Activated CD4-positive, alpha-beta T cell treated with anti-CD3 and anti-CD28 coated beads for 36 hours (primary cell): ENCODE measurements at regions of chr11 and their contacts with region 1.

Region 1: DNA sequence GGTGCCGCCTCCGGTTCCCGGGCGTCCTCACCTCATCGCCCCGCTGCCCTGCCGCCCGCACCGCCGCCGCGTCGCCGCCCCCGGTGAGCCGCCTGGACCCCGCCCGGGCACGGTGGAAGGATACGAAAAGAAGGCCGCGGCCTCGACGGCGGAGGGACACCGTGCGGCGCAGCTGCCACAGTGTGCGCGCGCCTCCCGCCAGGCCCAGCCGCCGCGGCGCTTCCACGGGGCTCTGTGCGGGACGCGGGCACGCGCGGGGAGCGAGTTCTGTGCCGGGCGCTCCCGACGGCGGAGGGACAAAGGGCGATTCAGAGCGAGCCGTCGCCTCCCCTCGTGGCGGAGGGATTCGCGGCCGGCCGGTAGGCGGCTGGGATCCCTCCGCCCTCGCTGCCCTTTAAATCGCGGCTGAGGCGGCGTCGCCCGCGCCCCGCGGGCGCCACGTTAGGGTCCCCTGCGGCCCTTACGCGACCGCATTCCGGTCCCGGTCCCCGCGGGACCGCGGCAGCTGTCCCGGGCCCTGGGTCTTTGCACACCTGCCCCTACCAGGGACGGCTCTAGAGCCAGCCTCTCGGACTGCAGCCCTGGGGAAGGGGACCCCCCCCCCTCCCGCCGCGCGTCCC is 569 bp upstream of the KMT5B start:
- DNase-seq: peak; percentile 87
- ATAC-seq: peak; percentile 41
- H3K4me3 Mint-ChIP-seq: peak overlapping the region; percentile 71
- H3K27ac Mint-ChIP-seq: no peak overlapping the region
- H3K4me1 Mint-ChIP-seq: peaks cover 47% of the 10 kb centered on the region
- H3K27me3 Mint-ChIP-seq: peaks cover 2% of the 10 kb centered on the region

Region 2: DNA sequence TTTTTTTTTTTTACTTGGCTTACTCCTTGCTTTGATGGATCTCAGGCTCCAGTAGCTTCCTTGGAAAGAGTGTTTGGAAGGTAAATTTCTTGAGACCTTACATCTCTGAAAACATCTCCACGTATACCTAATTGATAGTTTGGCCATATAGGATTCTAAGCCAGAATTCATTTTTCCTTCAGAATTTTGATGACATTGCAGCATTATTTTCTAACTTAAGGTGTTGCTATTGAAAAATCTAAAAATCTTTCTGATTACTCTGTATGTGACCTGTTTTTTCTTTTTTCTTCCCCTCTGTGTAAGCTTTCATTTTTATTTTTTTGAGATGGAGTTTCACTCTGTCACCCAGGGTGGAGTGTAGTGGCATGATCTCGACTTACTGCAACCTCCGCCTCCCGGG is 1461.5 kb before region 1 on chr11:
- CTCF ChIA-PET with region 1: no interaction called
- POLR2A ChIA-PET with region 1: no interaction called
- intact Hi-C with region 1: no loop called
- DNase-seq: no peak
- ATAC-seq: no peak
- H3K4me3 Mint-ChIP-seq: no peak overlapping the region
- H3K27ac Mint-ChIP-seq: no peak overlapping the region
- H3K4me1 Mint-ChIP-seq: no peaks in the 10 kb centered on the region
- H3K27me3 Mint-ChIP-seq: no peaks in the 10 kb centered on the region

Region 3: DNA sequence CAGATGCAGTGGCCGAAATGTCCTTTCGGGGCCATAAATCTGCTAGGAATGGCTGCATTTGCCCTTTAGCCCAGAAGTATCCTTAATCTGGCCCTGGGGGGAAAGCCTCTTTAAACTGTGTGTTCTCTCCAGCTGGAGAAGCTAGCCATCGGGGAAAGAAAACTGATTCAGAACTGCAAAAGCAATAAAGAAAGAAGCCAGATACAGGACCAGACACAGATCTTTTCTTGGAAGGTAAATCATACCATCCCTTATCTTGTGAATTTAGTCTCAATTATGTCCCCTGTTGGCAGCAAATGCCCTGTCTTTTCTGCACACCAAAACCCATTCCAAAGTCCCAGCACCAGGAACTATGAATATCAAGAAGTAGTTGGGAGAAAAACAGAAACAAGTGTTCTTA is 1281.1 kb before region 1 on chr11:
- CTCF ChIA-PET with region 1: no interaction called
- POLR2A ChIA-PET with region 1: no interaction called
- intact Hi-C with region 1: no loop called
- DNase-seq: no peak
- ATAC-seq: no peak
- H3K4me3 Mint-ChIP-seq: no peak overlapping the region
- H3K27ac Mint-ChIP-seq: no peak overlapping the region
- H3K4me1 Mint-ChIP-seq: no peaks in the 10 kb centered on the region
- H3K27me3 Mint-ChIP-seq: no peaks in the 10 kb centered on the region

Region 4: DNA sequence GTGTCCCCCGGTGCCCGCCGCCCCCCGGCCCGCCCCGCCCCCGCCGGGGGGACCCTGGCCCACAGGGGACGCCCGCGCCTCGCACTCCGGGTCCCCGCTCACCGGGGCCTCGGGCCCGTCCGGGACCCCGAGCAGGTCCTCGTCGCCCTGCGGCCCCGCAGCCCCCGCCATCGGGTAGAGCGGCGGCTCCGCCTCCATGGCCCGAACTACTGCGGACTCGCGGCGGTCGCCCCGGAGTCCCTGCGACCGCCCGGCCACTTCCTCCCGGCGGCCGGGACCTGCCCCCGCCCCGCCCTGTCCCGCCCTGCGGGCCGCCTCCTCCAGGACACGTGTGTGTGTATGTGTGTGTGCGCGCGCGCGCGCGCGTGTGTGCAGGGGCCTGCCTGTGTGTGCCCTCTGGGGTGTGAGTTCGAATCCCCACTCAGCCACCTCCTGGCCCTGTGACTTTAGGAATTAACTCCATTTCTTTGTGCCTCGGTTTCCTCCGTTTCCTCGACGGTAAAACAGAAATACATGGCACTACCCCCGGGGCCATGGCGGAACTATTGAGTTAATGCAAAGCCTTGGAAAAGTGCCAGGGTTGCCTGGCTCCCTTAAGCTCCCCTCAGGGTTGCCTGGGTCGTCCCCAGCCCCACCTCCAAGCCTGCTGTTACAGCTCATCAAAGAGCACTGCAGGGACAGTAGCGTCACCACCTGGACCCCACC is 209.7 kb before region 1 on chr11 and contains the start of gene UNC93B1:
- CTCF ChIA-PET with region 1: no interaction called
- POLR2A ChIA-PET with region 1: no interaction called
- intact Hi-C with region 1: loop called (anchors 2 to 10 kb)
- DNase-seq: peak; percentile 93
- ATAC-seq: peak; percentile 93
- H3K4me3 Mint-ChIP-seq: peak within 1 kb of the TSS; percentile 73
- H3K27ac Mint-ChIP-seq: peak within 1 kb of the TSS; percentile 66
- H3K4me1 Mint-ChIP-seq: peaks cover 15% of the 10 kb centered on the region
- H3K27me3 Mint-ChIP-seq: no peaks in the 10 kb centered on the region
- total RNA-seq, gene UNC93B1: 16.3 to 16.7 TPM

Region 5: GRCh38 chr11:68121067-68121899 is 92.4 kb before region 1 on chr11 and contains the start of gene CHKA:
- CTCF ChIA-PET with region 1: interaction called, 5 read pairs
- POLR2A ChIA-PET with region 1: no interaction called
- intact Hi-C with region 1: loop called in 1 of 2 experiments (anchors 1 kb)
- DNase-seq: peak; percentile 94
- ATAC-seq: peak; percentile 97
- H3K4me3 Mint-ChIP-seq: peak within 1 kb of the TSS; percentile 71
- H3K27ac Mint-ChIP-seq: peak within 1 kb of the TSS; percentile 68
- H3K4me1 Mint-ChIP-seq: peaks cover 7% of the 10 kb centered on the region
- H3K27me3 Mint-ChIP-seq: no peaks in the 10 kb centered on the region
- total RNA-seq, gene CHKA: 5.5 to 7.5 TPM

Region 6: DNA sequence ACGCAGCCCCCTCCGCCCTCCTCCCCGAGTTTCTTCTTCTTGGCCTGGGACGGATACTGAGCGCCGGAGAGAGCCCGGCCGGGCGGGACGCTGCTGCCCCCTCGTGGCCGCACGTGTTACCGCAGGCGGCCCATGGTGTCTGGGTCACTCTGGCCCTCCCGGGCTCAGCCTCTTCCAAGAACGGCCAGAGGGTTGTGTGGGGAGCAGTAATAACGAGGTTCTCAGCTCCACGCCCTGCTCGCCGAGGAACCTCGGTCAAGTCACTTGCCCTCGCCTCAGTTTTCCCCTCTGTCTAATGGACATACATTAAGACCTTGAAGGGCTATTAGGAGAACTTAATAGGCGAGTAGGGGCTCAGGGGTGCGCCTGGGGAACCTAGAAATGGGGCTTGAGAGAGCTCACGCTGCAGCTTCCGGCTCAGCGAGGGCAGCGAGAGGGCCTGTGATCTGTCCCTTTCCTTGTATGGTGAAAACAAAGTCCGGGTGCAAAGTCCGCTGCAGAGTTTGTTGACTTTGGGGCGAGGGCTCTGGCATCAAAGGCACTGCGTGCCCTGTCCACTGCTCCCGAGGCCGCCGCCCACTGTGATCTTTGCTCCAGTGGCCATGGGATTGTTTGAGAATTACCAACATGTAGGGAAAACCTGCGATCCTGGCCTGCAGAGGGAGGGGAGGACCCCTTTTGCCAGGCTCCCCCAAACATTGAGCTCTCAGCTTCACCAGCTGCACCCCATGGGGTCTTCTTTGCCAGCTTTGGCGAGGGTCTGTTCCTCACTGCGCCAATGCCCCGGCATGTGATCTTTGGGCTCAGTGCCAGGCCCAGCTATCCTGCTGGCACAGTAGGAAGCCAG is 84.4 kb after region 1 on chr11:
- CTCF ChIA-PET with region 1: interaction called, 4 read pairs
- POLR2A ChIA-PET with region 1: no interaction called
- intact Hi-C with region 1: loop called in 1 of 2 experiments (anchors 1 kb)
- DNase-seq: peak; percentile 83
- ATAC-seq: peak; percentile 98
- H3K4me3 Mint-ChIP-seq: no peak overlapping the region
- H3K27ac Mint-ChIP-seq: no peak overlapping the region
- H3K4me1 Mint-ChIP-seq: no peaks in the 10 kb centered on the region
- H3K27me3 Mint-ChIP-seq: no peaks in the 10 kb centered on the region

Region 7: DNA sequence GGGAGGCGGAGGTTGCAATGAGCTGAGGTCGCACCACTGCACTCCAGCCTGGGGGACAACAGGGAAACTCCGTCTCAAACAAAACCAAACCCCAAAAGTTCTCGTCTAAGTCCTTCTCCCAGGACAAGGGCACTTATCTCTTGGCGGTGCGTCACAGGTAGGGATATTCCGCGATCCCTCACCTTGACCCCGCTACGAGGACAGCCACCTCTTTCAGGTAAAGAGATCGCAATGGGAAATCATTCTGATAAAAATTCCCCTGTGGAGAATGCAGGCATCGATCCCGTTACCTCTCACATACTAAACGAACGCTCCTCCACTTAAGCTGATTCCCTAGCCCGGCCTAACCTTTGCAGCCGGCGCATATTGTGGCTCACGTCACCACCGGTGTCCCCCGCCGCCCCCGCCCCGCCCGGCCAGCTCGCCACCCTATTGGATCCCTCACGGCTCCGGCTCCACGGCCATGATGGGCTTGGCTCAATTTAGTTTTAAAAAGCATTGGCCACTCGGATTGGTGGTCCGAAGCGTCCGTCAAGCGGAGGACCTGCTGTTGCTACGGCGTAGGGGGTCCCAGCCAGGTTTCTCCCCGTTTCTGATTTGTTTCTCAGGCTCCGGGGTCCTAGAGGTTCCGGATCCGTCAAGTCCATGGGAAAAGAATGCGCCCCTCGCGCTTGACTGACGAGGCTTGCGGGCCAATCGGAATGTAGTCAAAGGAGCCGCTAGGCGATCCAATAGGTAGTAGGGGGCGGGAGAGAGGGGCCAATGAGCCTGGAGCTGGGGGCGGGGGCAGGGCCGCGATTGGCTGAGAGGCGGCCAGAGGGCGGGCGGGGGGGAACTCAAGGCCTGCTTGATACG is 246.4 kb after region 1 on chr11:
- CTCF ChIA-PET with region 1: interaction called, 4 read pairs
- POLR2A ChIA-PET with region 1: interaction called, 7 read pairs
- intact Hi-C with region 1: loop called in 1 of 2 experiments (anchors 1 kb)
- DNase-seq: peak; percentile 97
- ATAC-seq: peak; percentile 93
- H3K4me3 Mint-ChIP-seq: peak overlapping the region; percentile 86
- H3K27ac Mint-ChIP-seq: peak overlapping the region; percentile 89
- H3K4me1 Mint-ChIP-seq: peaks cover 31% of the 10 kb centered on the region
- H3K27me3 Mint-ChIP-seq: no peaks in the 10 kb centered on the region

Region 8: GRCh38 chr11:68542617-68543016 is 329.0 kb after region 1 on chr11:
- CTCF ChIA-PET with region 1: no interaction called
- POLR2A ChIA-PET with region 1: no interaction called
- intact Hi-C with region 1: no loop called
- DNase-seq: no peak
- ATAC-seq: peak; percentile 30
- H3K4me3 Mint-ChIP-seq: no peak overlapping the region
- H3K27ac Mint-ChIP-seq: no peak overlapping the region
- H3K4me1 Mint-ChIP-seq: peaks cover 64% of the 10 kb centered on the region
- H3K27me3 Mint-ChIP-seq: no peaks in the 10 kb centered on the region